Naive thymus-derived CD8-positive, alpha-beta T cell (primary cell): ENCODE measurements at regions of chr4 and their contacts with region 1.

Region 1: DNA sequence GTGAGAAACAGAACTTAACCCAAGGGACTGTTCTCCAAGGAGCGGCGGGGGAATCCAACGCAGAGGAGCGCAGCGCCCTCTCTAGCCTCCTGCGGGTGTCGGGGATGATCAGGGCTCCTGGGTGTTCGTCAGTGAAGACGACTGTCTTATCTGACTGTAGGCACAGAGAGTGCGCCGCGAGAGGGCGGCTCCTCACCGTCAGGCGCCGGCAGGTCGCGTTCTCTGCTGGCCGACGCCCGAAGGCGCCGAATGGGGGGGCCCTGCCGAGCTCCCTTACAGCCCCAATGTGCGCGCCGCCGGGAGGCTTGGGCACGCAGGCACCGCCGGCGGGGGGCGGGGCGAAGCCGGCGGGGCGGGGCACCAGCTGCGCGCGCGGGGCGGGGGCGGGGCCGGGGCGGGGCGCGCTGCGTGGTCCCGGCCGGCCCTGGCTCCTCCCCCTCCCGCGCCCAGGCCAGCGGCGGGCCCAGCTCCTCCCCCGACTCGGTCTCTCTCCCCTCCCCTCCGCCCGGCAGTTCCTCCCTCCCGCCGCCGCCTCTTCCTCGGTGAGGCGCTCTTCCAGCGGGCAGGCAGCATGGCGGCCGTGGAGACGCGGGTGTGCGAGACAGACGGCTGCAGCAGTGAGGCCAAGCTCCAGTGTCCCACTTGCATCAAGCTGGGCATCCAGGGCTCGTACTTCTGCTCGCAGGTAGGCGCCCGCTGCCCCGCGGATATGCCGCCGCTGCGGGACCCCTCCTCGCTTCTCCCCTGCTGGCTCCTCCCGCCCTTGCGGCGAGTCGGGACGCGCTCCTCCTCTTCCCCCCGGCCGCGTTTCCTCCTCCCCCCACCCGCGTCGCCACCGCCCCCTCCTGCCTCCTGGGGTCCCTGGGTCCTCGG is at the start of gene METAP1:
- DNase-seq: peak; percentile 85 to 98 (median 97)
- ATAC-seq: peak; percentile 87 to 89
- H3K4me3 Mint-ChIP-seq: peak within 1 kb of the TSS; percentile 68 to 96 (median 91)
- H3K27ac Mint-ChIP-seq: peak within 1 kb of the TSS; percentile 92 to 100 (median 98)
- H3K4me1 Mint-ChIP-seq: peaks cover 9 to 44% (median 41%) of the 10 kb centered on the region in 4 donors
- H3K27me3 Mint-ChIP-seq: no peaks in the 10 kb centered on the region
- polyA plus RNA-seq, gene METAP1: 23.8 to 29.2 (median 24.3) TPM

Region 2: GRCh38 chr4:98143001-98143899 is 852.2 kb before region 1 on chr4 and contains the start of gene STPG2:
- POLR2A ChIA-PET with region 1: interaction called, 14 read pairs
- DNase-seq: peak; percentile 85 to 95 (median 91)
- ATAC-seq: peak; percentile 95 to 97
- H3K4me3 Mint-ChIP-seq: peak within 1 kb of the TSS; percentile 89 to 99 (median 93)
- H3K27ac Mint-ChIP-seq: peak within 1 kb of the TSS; percentile 94 to 99 (median 98)
- H3K4me1 Mint-ChIP-seq: peaks cover 5 to 26% (median 18%) of the 10 kb centered on the region in 4 donors
- H3K27me3 Mint-ChIP-seq: no peaks in the 10 kb centered on the region
- polyA plus RNA-seq, gene STPG2: 0.09 to 0.10 TPM in 2 of 3 donors, not detected in the other

Region 3: DNA sequence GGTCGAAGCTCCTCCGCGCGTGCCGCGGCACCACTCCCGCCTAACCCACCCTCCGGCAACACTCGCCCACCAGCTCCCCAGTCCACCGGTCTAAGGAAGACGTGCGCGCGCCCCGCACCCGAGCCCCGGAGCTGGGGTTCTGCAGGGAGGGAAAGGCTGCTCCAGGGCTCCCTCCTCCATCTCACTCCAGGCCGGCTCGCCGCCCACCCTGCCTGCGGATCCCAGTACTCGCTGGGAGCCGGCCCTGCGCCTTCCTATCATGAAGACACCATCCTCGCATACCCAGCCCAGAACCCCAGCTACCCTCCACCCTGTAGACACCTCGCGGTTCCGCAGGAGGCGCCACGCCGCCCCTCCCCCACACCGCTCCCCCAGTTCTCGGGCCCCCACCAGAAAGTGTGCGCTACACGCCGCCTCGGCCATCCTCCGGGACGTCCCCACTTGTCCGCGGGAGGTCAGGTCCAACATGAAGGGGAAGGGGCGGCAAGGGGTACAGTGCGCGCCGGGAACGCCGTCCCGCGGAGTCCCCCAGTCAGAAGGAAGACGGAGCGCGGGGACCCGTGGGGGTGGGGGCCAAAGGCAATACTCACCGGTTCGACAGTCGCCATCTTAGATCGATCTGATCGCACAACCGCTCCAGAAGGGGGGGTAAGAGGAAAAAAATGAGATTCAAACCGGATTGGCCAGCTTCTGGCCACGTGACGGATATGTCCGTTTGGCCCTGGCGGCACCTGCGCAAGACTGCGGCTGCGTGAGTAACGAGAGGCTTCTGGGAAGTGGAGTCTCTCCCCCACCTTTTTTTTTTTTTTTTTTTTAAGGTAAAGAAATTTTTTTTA is 66.7 kb before region 1 on chr4 and contains the start of gene EIF4E:
- POLR2A ChIA-PET with region 1: interaction called, 34 read pairs
- DNase-seq: peak; percentile 85 to 100 (median 97)
- ATAC-seq: peak; percentile 82 to 86
- H3K4me3 Mint-ChIP-seq: peak within 1 kb of the TSS; percentile 91 to 100 (median 98)
- H3K27ac Mint-ChIP-seq: peak within 1 kb of the TSS; percentile 92 to 99 (median 96)
- H3K4me1 Mint-ChIP-seq: peaks cover 8 to 53% (median 34%) of the 10 kb centered on the region in 4 donors
- H3K27me3 Mint-ChIP-seq: peaks cover 0 to 7% (median 0%) of the 10 kb centered on the region in 5 donors
- polyA plus RNA-seq, gene EIF4E: 51.5 to 68.3 (median 62.7) TPM

Region 4: GRCh38 chr4:98976694-98977310 is 18.6 kb before region 1 on chr4:
- POLR2A ChIA-PET with region 1: no interaction called
- DNase-seq: no peak
- ATAC-seq: no peak
- H3K4me3 Mint-ChIP-seq: no peak overlapping the region
- H3K27ac Mint-ChIP-seq: peak overlapping the region in 1 of 10 donors; percentile 3
- H3K4me1 Mint-ChIP-seq: no peaks in the 10 kb centered on the region
- H3K27me3 Mint-ChIP-seq: peaks cover 0 to 20% (median 3%) of the 10 kb centered on the region in 5 donors

Region 5: DNA sequence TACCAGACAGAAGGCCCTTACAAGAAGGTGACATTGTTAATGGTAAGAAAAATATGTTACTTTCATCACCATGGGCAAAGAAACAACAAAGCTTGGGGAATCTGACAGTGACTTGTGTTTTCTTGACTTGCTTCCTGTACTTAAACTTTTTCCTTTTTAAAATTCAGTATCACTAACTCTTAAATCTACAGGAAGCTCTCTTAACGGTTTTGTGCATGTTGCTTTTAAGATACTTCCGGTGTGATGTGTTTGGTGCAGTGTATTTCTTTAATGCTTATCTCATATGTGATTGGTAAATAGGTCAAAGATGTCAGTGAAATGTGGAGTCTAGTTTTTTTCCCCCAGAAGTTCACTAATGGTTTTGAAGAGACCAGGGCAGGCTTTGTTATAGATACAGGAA is 47.9 kb after region 1 on chr4:
- POLR2A ChIA-PET with region 1: interaction called, 22 read pairs
- DNase-seq: peak in 4 of 10 donors; percentile 22 to 68 (median 52)
- ATAC-seq: peak; percentile 92 to 97
- H3K4me3 Mint-ChIP-seq: peak overlapping the region; percentile 2 to 78 (median 57)
- H3K27ac Mint-ChIP-seq: peak overlapping the region; percentile 77 to 93 (median 88)
- H3K4me1 Mint-ChIP-seq: peaks cover 6 to 23% (median 18%) of the 10 kb centered on the region in 4 donors
- H3K27me3 Mint-ChIP-seq: no peaks in the 10 kb centered on the region

Region 6: DNA sequence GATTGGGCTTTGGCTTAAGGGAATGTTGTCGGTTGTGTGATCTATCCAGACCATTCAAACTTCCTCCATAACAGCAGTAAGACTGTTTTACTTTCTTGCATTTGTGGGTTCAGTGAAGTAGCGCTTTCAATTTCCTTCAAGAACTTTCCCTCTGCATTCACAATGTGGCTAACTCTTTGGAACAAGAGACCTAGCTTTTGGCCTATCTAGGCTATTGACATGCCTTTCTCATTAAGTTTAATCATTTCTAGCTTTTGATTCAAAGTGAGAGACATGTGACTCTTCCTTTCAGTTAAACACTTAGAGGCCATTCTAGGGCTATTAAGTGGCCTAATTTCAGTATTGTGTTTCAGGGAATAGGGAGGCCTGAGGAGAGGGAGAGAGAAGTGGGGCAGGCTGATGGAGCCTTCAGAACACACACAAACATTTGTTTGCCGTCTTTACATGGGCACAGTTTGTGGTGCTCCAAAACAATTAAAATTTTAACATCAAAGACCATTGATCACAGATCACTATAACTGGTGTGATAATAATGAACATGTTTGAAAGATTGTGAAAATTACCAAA is 59.1 kb after region 1 on chr4:
- POLR2A ChIA-PET with region 1: interaction called, 34 read pairs
- DNase-seq: no peak
- ATAC-seq: no peak
- H3K4me3 Mint-ChIP-seq: no peak overlapping the region
- H3K27ac Mint-ChIP-seq: peak overlapping the region in 5 of 10 donors; percentile 3 to 74 (median 27)
- H3K4me1 Mint-ChIP-seq: peaks cover 9 to 14% (median 10%) of the 10 kb centered on the region in 4 donors
- H3K27me3 Mint-ChIP-seq: no peaks in the 10 kb centered on the region

Region 7: DNA sequence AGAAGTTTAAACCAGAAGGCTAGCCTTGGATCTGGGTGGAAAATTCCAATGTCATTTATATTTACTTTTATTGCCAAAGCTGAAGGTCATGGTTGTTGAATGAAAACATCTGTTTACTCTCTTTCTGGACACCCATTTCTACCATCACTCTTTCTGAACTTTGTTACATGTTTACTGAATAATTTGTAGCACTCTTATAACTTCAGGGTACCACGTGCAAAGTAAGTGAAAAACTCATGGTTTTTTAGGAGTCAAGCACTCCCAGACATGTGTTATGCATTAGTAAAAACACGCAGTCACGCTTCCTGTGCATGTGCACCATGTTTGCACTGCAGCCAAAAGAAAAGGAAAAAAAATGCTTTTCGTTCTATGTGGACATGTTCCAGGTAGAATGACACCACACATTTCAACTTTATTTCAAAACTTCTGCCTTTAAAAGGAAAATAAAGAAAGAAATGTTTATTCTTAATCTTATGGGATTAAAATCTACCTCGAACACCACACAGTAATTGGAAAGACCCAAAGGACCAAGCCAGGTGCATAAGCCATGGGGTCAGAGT is 388.5 kb after region 1 on chr4:
- POLR2A ChIA-PET with region 1: no interaction called
- DNase-seq: no peak
- ATAC-seq: no peak
- H3K4me3 Mint-ChIP-seq: no peak overlapping the region
- H3K27ac Mint-ChIP-seq: no peak overlapping the region
- H3K4me1 Mint-ChIP-seq: no peaks in the 10 kb centered on the region
- H3K27me3 Mint-ChIP-seq: peaks cover 1 to 14% (median 9%) of the 10 kb centered on the region in 5 donors